Dendritic cell treated with granulocyte-macrophage colony-stimulating factor and Interleukin-4, amounts not matched to agents 40 ng/mL and 50 ng/mL, for 4 days (primary cell): ENCODE measurements at regions of chr13 and their contacts with region 1.

Region 1: GRCh38 chr13:52048516-52048915 is 24.0 kb downstream of the UTP14C start:
- H3K4me3 Mint-ChIP-seq: no peak overlapping the region
- H3K27ac Mint-ChIP-seq: no peak overlapping the region
- H3K4me1 Mint-ChIP-seq: no peaks in the 10 kb centered on the region
- H3K27me3 Mint-ChIP-seq: no peaks in the 10 kb centered on the region

Region 2: DNA sequence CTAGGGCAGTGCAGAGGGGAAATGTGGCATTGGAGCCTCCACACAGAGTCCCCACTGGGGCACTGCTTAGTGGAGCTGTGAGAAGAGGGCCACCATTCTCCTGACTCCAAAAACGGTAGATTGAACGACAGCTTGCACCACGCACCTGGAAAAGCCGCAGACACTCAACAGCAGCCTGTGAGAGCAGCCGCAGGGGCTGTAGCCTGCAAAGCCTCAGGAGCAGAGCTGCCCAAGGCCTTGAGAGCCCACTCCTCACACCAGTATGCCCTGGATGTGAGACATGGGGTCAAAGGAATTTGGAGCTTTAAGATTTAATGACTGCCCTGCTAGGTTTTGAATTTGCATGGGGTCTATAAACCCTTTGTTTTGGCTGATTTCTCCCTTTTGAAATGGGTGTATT is 48.7 kb after region 1 on chr13:
- intact Hi-C with region 1: loop called (anchors 10 kb)
- H3K4me3 Mint-ChIP-seq: no peak overlapping the region
- H3K27ac Mint-ChIP-seq: no peak overlapping the region
- H3K4me1 Mint-ChIP-seq: no peaks in the 10 kb centered on the region
- H3K27me3 Mint-ChIP-seq: no peaks in the 10 kb centered on the region

Region 3: GRCh38 chr13:52155177-52155576 is 106.7 kb after region 1 on chr13:
- intact Hi-C with region 1: no loop called
- H3K4me3 Mint-ChIP-seq: no peak overlapping the region
- H3K27ac Mint-ChIP-seq: no peak overlapping the region
- H3K4me1 Mint-ChIP-seq: peaks cover 38% of the 10 kb centered on the region
- H3K27me3 Mint-ChIP-seq: no peaks in the 10 kb centered on the region